CD4-positive, alpha-beta memory T cell (primary cell): ENCODE measurements at regions of chr1 and their contacts with region 1.

Region 1: GRCh38 chr1:247331172-247331991 is at the start of gene ZNF496:
- DNase-seq: peak; percentile 52 to 68 (median 59)
- H3K4me3 ChIP-seq: peak within 1 kb of the TSS; percentile 28 to 69
- H3K4me3 Mint-ChIP-seq: peak within 1 kb of the TSS; percentile 92 to 98 (median 93)
- H3K27ac ChIP-seq: peak within 1 kb of the TSS; percentile 31
- H3K27ac Mint-ChIP-seq: peak within 1 kb of the TSS; percentile 29 to 93 (median 64)
- H3K4me1 ChIP-seq: peaks cover 16% of the 10 kb centered on the region
- H3K4me1 Mint-ChIP-seq: peaks cover 1 to 19% (median 13%) of the 10 kb centered on the region in 4 donors
- H3K27me3 ChIP-seq: no peaks in the 10 kb centered on the region
- H3K27me3 Mint-ChIP-seq: no peaks in the 10 kb centered on the region
- total RNA-seq, gene ZNF496: 11.3 to 12.4 TPM

Region 2: DNA sequence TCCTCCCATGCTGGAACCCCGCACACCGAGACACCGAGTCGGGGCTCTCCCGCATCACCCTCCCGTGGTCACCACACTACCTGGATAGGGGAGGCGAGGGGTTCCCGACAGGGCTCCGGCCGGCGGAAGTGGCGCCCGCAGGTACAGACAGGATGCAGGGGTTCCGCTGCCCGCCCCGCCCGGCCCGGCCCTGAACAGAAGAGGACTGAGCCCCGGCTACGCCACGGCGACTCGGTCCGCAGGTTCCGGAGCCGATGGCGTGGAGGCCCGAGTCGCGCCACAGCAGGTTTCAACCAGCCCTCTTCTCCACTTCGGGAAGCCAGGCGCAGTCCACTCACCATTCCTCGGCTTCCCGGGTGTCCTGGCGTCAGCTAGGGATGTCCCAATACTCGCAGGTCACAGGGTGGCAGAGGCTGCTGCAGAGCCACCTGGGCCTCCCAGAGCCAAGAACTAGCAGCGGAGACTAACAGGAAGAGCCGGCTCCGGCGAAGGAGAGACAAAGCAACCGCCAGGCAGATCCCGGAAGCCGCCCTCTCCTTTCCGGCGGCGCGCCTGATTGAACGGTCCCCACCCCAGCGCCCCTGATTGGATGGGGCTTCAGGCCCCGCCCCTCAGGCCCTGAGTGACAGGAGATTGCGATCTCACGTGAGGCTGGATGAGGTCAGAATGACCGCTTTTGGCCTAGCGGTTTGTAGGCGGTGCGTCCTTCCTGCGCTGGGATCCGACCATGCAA is 227.4 kb before region 1 on chr1 and contains the start of gene ZNF669:
- CTCF ChIA-PET with region 1: no interaction called
- POLR2A ChIA-PET with region 1: no interaction called
- intact Hi-C with region 1: loop called (anchors 1 kb)
- DNase-seq: peak; percentile 87 to 92 (median 89)
- H3K4me3 ChIP-seq: peak within 1 kb of the TSS; percentile 59 to 87
- H3K4me3 Mint-ChIP-seq: peak within 1 kb of the TSS; percentile 88 to 93 (median 90)
- H3K27ac ChIP-seq: peak within 1 kb of the TSS; percentile 49
- H3K27ac Mint-ChIP-seq: peak within 1 kb of the TSS; percentile 75 to 90 (median 83)
- H3K4me1 ChIP-seq: peaks cover 13% of the 10 kb centered on the region
- H3K4me1 Mint-ChIP-seq: peaks cover 9 to 25% (median 17%) of the 10 kb centered on the region in 4 donors
- H3K27me3 ChIP-seq: no peaks in the 10 kb centered on the region
- H3K27me3 Mint-ChIP-seq: peaks cover 18 to 19% of the 10 kb centered on the region in 2 donors
- total RNA-seq, gene ZNF669: 12.0 to 14.7 TPM